Posterior cingulate gyrus (tissue), 11 donors: ENCODE measurements at regions of chr2 and their contacts with region 1.

Region 1: DNA sequence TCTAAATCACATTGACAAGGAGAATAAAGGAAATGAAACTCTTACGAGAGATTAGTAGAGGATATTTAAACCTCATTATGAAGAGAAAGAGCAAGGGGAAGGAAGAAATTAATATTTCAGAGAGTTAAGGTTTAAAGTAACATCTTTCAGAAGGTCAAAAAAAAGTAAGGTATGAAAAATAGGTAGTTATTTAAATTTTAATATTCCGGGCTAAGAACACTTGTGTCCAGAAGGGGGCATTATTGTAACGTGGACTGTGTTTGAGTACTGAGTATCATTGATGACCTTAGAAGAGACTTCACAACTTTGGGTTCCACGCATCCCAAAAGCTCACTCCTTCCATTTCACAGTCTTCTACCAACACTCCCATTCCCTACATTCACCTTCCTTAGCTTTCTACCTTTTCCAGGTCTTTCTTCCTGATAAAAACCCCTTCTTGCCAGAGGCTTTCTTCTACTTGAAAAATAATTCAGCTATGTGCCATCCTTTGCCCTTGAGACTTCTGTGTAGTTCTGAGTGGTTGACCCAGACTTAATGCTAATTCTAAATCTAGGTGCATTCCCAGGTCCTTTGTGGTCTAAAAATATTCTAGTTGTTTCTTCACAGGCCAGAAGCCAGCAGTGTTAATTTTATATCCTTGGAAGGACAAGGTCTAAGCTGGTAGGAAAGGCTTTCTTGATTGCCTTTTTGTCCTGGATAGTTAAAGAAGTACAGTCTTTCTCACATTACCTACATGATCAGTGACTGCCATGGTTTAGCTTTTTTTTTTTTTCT is 16.5 kb downstream of the DYNC1I2 start:
- DNase-seq: no peak

Region 2: DNA sequence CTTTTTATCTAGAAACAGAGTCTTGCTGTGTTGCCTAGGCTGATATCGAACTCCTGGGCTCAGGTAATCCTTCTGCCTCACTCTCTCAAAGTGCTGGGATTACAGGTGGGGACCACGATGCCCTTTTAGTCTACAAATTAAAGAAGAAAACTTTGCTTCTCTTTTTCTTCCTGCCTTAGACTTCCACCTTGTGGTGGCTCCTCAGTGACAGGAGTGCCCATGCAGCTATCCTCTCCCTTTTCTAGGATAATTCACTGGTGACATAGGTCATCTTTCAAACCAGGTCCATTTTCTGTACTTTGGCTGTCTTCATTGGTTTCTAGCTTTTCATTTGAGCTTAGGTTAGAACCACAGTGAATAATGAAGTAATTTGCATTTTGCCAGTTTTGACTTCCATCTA is 256.1 kb before region 1 on chr2:
- intact Hi-C with region 1: no loop called
- DNase-seq: no peak

Region 3: GRCh38 chr2:171598713-171599319 is 104.9 kb before region 1 on chr2:
- intact Hi-C with region 1: loop called (anchors 10 kb)
- DNase-seq: peak in 5 of 10 donors; percentile 13 to 60 (median 34)

Region 4: GRCh38 chr2:172102391-172103278 is 398.9 kb after region 1 on chr2 and contains the start of gene DLX2:
- intact Hi-C with region 1: loop called (anchors 5 kb)
- DNase-seq: peak; percentile 56 to 95 (median 71)

Region 5: DNA sequence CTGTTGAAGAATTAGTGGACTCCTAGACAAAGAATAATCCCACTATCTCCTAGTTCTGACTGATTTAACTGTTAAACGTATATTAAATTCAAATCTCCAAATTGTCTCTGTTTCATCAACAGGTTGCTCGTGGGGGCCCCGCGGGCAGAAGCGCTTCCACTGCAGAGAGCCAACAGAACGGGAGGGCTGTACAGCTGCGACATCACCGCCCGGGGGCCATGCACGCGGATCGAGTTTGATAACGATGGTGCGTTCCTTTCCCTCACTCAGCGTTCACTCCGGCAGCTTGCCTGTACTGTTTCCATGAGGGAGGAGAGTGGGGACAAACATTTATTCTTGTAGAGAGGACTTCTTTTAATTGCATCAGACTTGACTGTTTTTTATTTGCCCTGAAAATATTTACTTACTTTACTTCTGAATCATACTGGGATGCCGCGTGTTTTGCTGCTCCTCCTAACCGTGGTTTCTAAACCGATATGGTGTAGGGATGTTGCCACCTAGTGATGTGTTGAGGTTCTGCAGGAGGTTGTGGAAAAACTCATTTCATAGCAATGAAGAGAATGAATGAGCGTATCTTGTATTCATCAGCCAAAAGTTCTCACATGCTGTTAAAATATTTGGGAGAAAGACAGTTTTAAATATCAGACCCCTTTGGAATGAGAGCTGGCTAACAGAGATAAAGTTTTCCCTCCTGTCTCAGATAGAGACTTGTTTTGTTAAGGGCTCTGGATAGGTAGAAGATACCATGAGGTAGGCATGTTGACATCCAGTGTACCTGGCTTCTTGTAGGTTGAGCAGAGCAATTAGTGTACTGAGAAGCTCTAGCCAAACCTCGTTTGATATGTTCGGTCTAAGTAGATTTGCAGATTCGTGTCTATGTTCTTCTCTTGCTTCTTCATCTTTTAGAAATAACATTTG is 761.9 kb after region 1 on chr2:
- intact Hi-C with region 1: loop called (anchors 5 kb)
- DNase-seq: peak in 8 of 10 donors; percentile 54 to 88 (median 69)